ENCODE measurements at regions of chr20 and their contacts with region 1.

Region 1: DNA sequence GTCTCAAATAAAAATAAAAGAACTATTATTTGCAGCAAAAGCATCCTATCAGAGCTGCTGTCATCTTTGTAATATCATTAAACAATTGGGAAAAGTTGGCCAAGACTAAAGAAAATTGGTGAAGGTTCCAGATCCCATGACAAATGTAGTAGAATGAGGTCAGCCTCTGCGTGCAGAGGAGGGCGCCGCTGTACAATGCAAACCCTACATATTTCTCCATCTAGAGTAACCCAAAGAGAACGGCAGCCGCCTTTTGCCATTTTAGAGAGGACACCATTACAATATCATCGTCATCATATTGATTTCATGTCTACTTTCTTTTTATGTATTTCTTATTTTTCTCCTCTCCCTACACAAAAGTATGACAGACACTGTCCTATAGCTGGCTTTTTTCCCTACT is 59.5 kb downstream of the ZMYND8 start:
- DNase-seq: no peak
- ATAC-seq: peak; percentile 55
- H3K4me3 Mint-ChIP-seq: no peak overlapping the region
- H3K27ac Mint-ChIP-seq: peak overlapping the region; percentile 80
- H3K4me1 Mint-ChIP-seq: peaks cover 44% of the 10 kb centered on the region
- H3K27me3 Mint-ChIP-seq: no peaks in the 10 kb centered on the region
- CTCF ChIP-seq: no peak; the same call in 1 of the 2 replicates

Region 2: DNA sequence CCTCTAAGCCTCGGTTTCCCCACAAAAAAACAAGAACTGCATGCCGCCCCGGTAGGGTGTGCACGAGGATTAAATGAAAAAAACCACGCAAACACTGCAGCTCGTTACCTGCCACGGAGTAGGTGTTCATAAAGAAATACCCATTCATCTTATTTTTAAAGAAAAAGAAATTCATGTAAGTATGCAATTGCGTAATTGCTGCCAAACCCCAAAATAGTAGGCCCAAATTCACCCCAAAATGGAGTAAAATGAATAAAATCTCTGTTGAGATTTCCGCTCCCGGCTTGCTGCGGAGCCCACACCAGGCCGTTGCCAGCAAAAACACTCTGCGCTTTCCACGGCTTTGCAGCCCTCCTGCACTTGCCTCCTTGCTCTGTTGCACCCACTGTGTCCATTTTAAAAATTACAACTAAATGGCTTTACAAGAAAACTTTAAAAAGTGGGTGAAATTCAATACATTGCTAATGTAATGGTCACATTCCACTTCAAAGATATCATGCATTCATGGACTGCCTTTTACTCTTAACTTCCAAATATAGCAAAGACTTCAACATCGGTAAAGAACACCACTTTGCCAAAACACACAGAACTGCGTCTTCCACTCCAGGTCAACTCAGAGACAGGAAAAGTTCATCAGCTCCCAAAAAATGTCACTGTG is 65.4 kb before region 1 on chr20:
- CTCF ChIA-PET with region 1: no interaction called
- POLR2A ChIA-PET with region 1: no interaction called
- DNase-seq: no peak
- ATAC-seq: no peak
- H3K4me3 Mint-ChIP-seq: no peak overlapping the region
- H3K27ac Mint-ChIP-seq: peak overlapping the region; percentile 51
- H3K4me1 Mint-ChIP-seq: peaks cover 22% of the 10 kb centered on the region
- H3K27me3 Mint-ChIP-seq: no peaks in the 10 kb centered on the region
- CTCF ChIP-seq: no peak

Region 3: GRCh38 chr20:47272893-47273590 is 23.9 kb before region 1 on chr20:
- CTCF ChIA-PET with region 1: interaction called, 11 read pairs
- POLR2A ChIA-PET with region 1: no interaction called
- DNase-seq: peak; percentile 28
- ATAC-seq: peak; percentile 79
- H3K4me3 Mint-ChIP-seq: no peak overlapping the region
- H3K27ac Mint-ChIP-seq: peak overlapping the region; percentile 89
- H3K4me1 Mint-ChIP-seq: peaks cover 29% of the 10 kb centered on the region
- H3K27me3 Mint-ChIP-seq: no peaks in the 10 kb centered on the region
- CTCF ChIP-seq: peak; percentile 73

Region 4: DNA sequence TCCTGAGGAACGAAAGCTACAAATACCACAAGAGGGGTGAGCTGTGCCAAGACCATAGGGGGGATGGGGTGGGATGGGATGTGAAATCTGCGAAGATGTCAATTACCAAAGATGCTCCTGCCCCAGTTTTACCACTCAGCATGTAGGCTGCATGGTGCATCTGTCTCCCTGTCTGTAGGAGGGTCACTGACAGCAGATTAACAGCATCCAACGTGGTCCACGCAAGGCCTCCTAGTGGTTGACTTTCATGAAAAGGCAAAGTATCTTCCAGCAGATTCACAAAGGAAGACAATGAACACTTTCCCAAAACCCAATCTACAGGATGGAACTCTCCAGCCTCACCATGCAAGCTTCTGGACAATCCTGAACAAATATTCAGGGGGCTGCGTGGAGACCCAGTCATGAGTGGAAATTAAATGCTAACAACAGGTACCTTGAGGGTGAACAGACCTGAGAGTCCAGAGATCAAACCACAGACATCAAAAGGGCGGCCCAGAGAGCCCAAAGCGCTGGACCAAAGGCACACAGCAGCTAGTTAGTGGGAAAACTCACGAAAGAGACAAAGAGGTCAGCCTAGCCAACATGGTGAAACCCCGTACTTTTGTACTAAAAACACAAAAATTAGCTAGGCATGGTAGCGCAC is 15.2 kb after region 1 on chr20:
- CTCF ChIA-PET with region 1: no interaction called
- POLR2A ChIA-PET with region 1: no interaction called
- DNase-seq: no peak
- ATAC-seq: no peak
- H3K4me3 Mint-ChIP-seq: no peak overlapping the region
- H3K27ac Mint-ChIP-seq: peak overlapping the region; percentile 83
- H3K4me1 Mint-ChIP-seq: peaks cover 70% of the 10 kb centered on the region
- H3K27me3 Mint-ChIP-seq: no peaks in the 10 kb centered on the region
- CTCF ChIP-seq: no peak

Measured in WTC11 (cell line).